ENCODE measurements at regions of chr2 and their contacts with region 1.

Region 1: DNA sequence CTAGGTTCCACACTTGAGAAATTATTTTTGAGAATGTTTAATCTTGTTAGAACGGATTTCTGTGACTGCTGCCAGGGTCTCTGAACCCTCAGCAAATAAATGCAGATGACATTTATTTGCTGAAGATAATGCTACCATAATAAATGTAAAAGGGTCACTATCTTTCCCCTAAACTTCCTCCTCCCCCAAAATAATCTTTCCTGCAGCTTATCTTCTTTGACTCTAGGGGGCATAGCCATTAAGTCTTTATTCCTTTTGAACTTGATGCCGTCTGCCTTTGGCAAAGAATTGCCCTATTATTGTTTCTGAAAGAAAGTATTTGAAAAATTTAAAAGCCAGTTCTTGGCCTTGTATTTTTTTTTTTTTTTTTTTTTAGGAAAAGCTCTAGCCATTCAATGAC is 63.6 kb upstream of the ACSL3 start:
- DNase-seq: no peak
- ATAC-seq: peak in 1 of 2 donors; percentile 51
- H3K4me3 ChIP-seq: no peak overlapping the region
- H3K27ac ChIP-seq: peak overlapping the region in 2 of 4 donors; percentile 30 to 46
- H3K4me1 ChIP-seq: peaks cover 18 to 20% of the 10 kb centered on the region in 2 donors
- H3K27me3 ChIP-seq: no peaks in the 10 kb centered on the region
- CTCF ChIP-seq: peak in 3 of 5 experiments; percentile 41 to 55 (median 49)
- POLR2A ChIP-seq: no peak

Region 2: GRCh38 chr2:222903234-222904220 is 106.3 kb after region 1 on chr2:
- in situ Hi-C with region 1: loop called in 3 of 4 experiments (anchors 5 to 10 kb)
- intact Hi-C with region 1: loop called (anchors 5 kb)
- DNase-seq: no peak
- ATAC-seq: peak; percentile 58 to 70
- H3K4me3 ChIP-seq: no peak overlapping the region
- H3K27ac ChIP-seq: peak overlapping the region in 2 of 4 donors; percentile 32 to 42
- H3K4me1 ChIP-seq: peaks cover 44% of the 10 kb centered on the region in 2 donors
- H3K27me3 ChIP-seq: no peaks in the 10 kb centered on the region
- CTCF ChIP-seq: peak; percentile 52 to 75 (median 66)
- POLR2A ChIP-seq: no peak

Measured in gastrocnemius medialis (tissue), 4 donors.